ENCODE measurements at regions of chr5 and their contacts with region 1.

Region 1: DNA sequence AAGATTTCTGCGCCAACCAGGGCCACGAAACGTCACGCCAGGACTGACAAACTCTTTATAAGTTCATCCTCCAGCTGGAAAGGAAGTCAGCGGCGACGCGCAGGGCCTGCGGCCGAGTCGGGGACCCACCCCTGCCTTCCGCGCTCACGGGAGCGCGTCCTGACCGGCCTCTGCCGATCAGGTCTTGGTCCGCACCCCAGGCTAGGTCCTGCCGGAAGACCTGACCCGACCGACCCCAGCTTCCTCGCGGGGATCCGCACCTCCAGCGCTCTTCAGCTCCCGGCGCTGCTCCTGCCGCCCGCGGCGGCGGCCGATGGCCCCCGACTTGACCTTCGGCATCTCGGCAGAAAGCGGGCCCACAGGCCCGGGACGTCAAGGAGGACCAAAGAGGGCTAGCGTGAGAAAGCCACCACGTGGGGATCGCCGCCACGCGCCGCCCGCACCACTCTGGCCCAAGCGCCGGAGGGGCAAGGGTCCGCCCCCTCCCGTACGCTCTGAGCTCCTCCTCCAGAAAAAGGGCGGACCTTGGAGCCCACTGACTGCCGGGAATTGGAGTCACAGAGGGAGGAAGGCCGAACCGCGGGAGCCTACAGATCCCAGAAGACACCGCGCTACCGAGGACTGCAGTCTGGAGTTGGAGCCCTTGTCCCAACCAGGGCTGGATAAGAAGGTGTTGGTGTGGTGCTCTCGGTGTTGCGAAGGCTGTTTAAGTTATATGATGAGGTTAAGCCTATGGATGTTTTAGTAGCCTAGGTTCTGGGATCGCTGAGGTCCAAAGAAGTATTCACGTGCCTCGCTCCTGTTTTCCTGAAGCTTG is at the start of gene DIMT1:
- DNase-seq: peak; percentile 92 to 98 (median 94)
- ATAC-seq: peak; percentile 98
- H3K4me3 ChIP-seq: peak within 1 kb of the TSS; percentile 83
- H3K27ac ChIP-seq: peak within 1 kb of the TSS; percentile 89
- H3K4me1 ChIP-seq: peaks cover 7 to 11% of the 10 kb centered on the region in 2 experiments; a peak in 3 of 5 replicates
- H3K27me3 ChIP-seq: no peaks in the 10 kb centered on the region
- CTCF ChIP-seq: no peak
- EP300 ChIP-seq: no peak
- POLR2A ChIP-seq: peak; percentile 96
- RAD21 ChIP-seq: no peak; a peak in 1 of 4 replicates
- polyA plus RNA-seq, gene DIMT1: 28.9 to 39.9 TPM

Region 2: DNA sequence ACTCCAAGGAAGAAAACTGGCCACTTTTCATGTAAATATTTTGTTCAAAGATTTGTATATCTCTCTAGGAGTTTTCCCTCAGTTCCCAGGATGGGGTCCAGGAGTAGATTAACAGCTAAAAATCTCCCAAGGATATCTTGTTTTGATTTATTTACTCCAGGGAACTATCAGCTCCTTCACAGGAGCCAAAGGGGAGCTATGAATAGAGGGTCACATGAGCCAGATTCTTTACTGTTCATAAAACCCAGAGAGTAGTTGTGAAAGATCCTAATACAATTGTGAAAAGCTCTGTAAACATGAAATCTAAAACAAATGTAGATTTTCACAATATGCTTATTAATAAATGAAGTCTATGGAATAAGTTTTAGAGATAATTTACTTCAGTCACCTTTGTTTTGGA is 16.8 kb before region 1 on chr5:
- CTCF ChIA-PET with region 1: no interaction called
- POLR2A ChIA-PET with region 1: interaction called, 50 read pairs
- in situ Hi-C with region 1: no loop called
- intact Hi-C with region 1: no loop called
- DNase-seq: no peak
- ATAC-seq: no peak
- H3K4me3 ChIP-seq: no peak overlapping the region
- H3K27ac ChIP-seq: no peak overlapping the region
- H3K4me1 ChIP-seq: no peaks in the 10 kb centered on the region
- H3K27me3 ChIP-seq: no peaks in the 10 kb centered on the region
- CTCF ChIP-seq: no peak
- EP300 ChIP-seq: no peak
- POLR2A ChIP-seq: no peak
- RAD21 ChIP-seq: no peak

Region 3: GRCh38 chr5:62418462-62419076 is 14.9 kb after region 1 on chr5:
- CTCF ChIA-PET with region 1: no interaction called
- POLR2A ChIA-PET with region 1: interaction called, 70 read pairs
- in situ Hi-C with region 1: no loop called
- intact Hi-C with region 1: no loop called
- DNase-seq: peak in 1 of 4 experiments; percentile 40
- ATAC-seq: peak; percentile 11
- H3K4me3 ChIP-seq: no peak overlapping the region
- H3K27ac ChIP-seq: peak overlapping the region; percentile 25; the same call in 2 of the 3 replicates
- H3K4me1 ChIP-seq: peaks cover 36 to 65% of the 10 kb centered on the region in 2 experiments
- H3K27me3 ChIP-seq: no peaks in the 10 kb centered on the region; a peak in 1 of 5 replicates
- CTCF ChIP-seq: no peak
- EP300 ChIP-seq: no peak
- POLR2A ChIP-seq: no peak
- RAD21 ChIP-seq: no peak